ENCODE measurements at regions of chr3 and their contacts with region 1.

Region 1: DNA sequence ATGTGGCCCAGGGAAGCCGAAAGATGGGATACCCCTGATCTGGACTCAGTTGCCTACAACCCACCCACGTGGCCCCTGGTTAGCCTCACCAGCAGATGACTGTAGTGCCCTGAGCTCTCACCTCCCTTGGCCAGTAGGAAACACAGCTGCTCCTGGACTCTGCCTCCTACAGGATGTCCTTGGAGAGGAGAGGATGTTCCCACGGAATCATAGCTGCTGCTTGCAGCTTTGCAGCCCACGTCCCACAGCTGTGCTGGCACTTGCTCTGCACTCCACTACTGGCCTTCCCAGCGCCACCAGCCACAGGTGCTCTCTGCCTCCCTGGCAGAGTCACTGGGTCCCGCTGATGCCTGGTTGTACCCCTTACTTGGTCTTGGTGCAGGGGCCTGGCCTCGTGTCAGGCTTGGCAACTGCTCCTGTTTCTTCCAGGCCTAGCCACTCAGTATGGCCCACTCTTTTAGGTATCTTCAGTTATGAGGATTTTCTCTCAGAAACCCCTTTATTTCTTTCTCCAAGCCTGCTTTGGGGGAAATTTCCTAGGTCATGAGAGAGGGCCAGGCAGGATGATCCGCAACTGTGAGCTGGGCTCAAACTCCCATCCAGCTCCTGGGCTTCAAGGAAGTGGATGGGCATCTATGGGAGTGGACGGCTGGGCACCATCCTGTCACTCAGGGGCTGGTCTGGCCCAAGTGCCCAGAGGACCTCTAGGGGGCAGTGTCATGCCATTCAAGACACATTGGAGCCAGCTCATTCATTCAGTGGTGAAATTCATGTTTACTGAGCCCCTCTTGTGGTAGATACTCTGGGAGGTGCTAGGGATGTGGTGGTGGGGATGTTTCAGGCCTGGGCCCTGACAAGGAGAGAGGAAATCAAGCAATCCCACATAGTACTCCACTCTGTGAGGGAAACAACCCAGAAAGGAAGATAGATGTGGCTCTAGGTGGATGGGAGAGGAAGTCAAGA is 16.2 kb upstream of the VILL start:
- DNase-seq: peak in 1 of 2 donors; percentile 40
- ATAC-seq: peak; percentile 74 to 80
- H3K4me3 ChIP-seq: no peak overlapping the region
- H3K27ac ChIP-seq: no peak overlapping the region
- H3K4me1 ChIP-seq: peaks cover 4 to 6% of the 10 kb centered on the region in 2 donors
- H3K27me3 ChIP-seq: no peaks in the 10 kb centered on the region
- CTCF ChIP-seq: peak; percentile 44 to 76 (median 62)
- POLR2A ChIP-seq: no peak

Region 2: DNA sequence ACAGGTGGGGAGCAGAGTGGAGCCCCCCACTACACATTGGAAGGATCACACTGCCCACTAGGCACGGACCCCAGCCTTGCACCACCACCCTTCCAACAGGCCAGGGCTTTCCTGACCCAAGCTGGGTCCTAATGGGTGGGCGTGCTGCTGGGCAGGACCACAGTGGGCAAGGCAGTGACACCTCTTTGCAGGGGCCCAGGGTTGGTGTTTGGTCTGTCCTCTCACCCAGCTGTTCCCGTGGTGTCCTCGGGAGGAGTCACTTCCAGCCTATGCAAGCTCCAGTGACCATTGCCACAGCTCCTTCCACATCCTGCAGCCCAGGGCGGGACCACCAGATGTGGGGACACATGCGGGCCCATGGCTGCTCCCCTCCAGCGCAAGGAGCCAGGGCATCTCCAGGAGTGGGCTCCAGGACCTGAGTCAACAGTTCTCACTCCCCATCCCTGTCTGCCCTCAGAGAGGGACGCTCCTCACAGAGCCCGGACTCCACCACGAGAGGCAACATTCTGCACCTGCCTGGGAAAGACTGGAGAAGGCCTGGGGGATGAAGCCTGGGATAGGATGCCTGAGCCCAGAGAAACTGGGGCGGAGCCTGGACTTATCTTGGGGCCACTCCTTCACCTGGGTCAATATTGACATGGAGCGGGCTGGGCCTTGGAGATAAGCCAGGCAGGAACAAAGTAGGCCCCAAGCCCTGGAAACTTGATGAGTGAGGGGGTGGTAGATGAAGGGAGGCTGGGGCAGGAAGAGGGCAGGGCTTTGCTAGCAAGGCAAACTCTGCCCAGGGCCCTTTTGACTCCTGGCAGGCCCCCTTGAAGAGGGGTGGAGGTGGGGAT is 12.3 kb after region 1 on chr3:
- in situ Hi-C with region 1: no loop called
- intact Hi-C with region 1: loop called (anchors 1 kb)
- DNase-seq: no peak
- ATAC-seq: no peak
- H3K4me3 ChIP-seq: no peak overlapping the region
- H3K27ac ChIP-seq: no peak overlapping the region
- H3K4me1 ChIP-seq: no peaks in the 10 kb centered on the region
- H3K27me3 ChIP-seq: no peaks in the 10 kb centered on the region
- CTCF ChIP-seq: no peak
- POLR2A ChIP-seq: no peak

Region 3: GRCh38 chr3:38003371-38003816 is 29.0 kb after region 1 on chr3:
- in situ Hi-C with region 1: no loop called
- intact Hi-C with region 1: loop called (anchors 1 kb)
- DNase-seq: peak in 1 of 2 donors; percentile 45
- ATAC-seq: peak in 1 of 2 donors; percentile 13
- H3K4me3 ChIP-seq: no peak overlapping the region
- H3K27ac ChIP-seq: no peak overlapping the region
- H3K4me1 ChIP-seq: peaks cover 2 to 3% of the 10 kb centered on the region in 2 donors
- H3K27me3 ChIP-seq: no peaks in the 10 kb centered on the region
- CTCF ChIP-seq: peak; percentile 37 to 83 (median 75)
- POLR2A ChIP-seq: no peak